Activated CD4-positive, alpha-beta T cell treated with anti-CD3 and anti-CD28 coated beads for 36 hours (primary cell): ENCODE measurements at regions of chr3 and their contacts with region 1.

Region 1: GRCh38 chr3:129183569-129184395 is at the start of gene CNBP:
- DNase-seq: peak; percentile 96
- ATAC-seq: peak; percentile 95
- H3K4me3 Mint-ChIP-seq: peak within 1 kb of the TSS; percentile 96
- H3K27ac Mint-ChIP-seq: peak within 1 kb of the TSS; percentile 99
- H3K4me1 Mint-ChIP-seq: peaks cover 29% of the 10 kb centered on the region
- H3K27me3 Mint-ChIP-seq: no peaks in the 10 kb centered on the region
- total RNA-seq, gene CNBP: 305 to 379 TPM

Region 2: DNA sequence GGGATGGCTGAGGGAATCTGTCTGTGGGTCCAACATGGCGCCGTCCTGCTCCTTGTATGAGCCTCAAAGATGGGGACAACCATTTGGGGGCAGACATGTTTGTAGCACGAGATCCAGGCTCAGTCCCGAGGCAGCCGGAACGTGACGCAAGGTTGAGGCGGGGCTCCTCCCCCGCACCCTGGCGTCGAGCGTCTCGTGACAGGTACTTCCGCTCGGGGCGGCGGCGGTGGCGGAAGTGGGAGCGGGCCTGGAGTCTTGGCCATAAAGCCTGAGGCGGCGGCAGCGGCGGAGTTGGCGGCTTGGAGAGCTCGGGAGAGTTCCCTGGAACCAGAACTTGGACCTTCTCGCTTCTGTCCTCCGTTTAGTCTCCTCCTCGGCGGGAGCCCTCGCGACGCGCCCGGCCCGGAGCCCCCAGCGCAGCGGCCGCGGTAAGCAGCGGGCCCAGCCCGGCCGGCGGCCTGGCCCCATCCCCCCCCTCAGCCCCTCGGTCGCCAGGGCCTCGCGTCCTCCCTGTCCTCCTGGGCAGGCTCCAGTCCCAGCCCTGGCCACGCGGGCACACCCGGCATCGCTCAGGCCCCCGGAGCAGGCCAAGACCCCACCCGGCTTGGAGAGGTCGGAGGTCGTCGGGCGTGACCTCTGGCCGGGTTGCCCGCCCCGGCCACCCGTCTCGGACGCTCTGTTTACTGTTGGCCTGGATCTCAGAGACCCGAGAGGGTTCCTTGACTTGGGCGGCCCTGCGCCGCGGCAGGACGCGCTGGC is 457.7 kb before region 1 on chr3 and contains the start of gene RAB7A:
- CTCF ChIA-PET with region 1: no interaction called
- POLR2A ChIA-PET with region 1: no interaction called
- intact Hi-C with region 1: loop called in 1 of 2 experiments (anchors 5 kb)
- DNase-seq: peak; percentile 99
- ATAC-seq: peak; percentile 92
- H3K4me3 Mint-ChIP-seq: peak within 1 kb of the TSS; percentile 89
- H3K27ac Mint-ChIP-seq: peak within 1 kb of the TSS; percentile 92
- H3K4me1 Mint-ChIP-seq: peaks cover 52% of the 10 kb centered on the region
- H3K27me3 Mint-ChIP-seq: no peaks in the 10 kb centered on the region
- total RNA-seq, gene RAB7A: 297 to 534 TPM

Region 3: DNA sequence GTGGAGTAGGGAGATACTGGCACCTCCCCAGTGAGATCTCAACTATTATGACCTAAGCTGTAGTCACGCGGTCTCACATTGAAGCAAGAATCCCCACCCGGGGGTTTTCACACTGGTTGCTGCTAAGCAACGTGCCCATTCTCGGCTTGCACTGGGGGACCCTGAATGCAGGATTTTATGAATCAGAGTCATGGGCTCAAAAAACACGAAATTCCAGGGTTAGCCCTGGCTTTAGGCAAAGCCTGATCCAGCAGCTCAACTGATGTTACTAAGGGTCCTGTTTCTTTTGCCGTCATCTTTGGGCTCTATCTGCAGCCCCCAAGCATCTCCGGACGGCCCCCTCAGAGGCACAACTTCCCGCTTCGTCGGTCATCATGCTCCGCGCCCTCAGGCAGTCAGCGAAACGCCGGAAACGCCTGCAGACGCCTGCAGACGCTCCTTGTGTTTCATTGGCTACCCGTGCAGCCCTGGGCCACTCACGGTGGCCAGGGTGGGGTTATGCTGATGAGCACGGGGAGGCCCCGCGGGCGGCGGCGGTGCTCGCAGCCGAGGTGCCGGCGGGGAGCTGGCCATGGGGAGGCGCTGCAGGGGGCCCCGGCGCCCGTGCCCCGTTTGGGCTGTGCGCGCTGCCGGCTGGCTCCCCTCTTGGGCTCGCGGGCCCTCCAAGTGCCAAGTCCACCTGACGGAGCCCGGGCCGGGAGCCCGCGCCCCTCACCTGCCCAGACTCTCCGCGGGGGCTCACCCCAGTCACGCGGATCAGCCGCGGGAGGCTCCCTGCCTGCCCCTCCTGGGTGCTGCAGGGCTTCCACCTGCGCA is 156.8 kb before region 1 on chr3:
- CTCF ChIA-PET with region 1: interaction called, 3 read pairs
- POLR2A ChIA-PET with region 1: no interaction called
- intact Hi-C with region 1: loop called in 1 of 2 experiments (anchors 1 kb)
- DNase-seq: peak; percentile 96
- ATAC-seq: peak; percentile 100
- H3K4me3 Mint-ChIP-seq: peak overlapping the region; percentile 72
- H3K27ac Mint-ChIP-seq: peak overlapping the region; percentile 81
- H3K4me1 Mint-ChIP-seq: peaks cover 12% of the 10 kb centered on the region
- H3K27me3 Mint-ChIP-seq: no peaks in the 10 kb centered on the region

Region 4: GRCh38 chr3:129233538-129233937 is 49.8 kb after region 1 on chr3:
- CTCF ChIA-PET with region 1: no interaction called
- POLR2A ChIA-PET with region 1: no interaction called
- intact Hi-C with region 1: loop called (anchors 1 to 5 kb)
- DNase-seq: no peak
- ATAC-seq: no peak
- H3K4me3 Mint-ChIP-seq: no peak overlapping the region
- H3K27ac Mint-ChIP-seq: no peak overlapping the region
- H3K4me1 Mint-ChIP-seq: peaks cover 13% of the 10 kb centered on the region
- H3K27me3 Mint-ChIP-seq: no peaks in the 10 kb centered on the region

Region 5: DNA sequence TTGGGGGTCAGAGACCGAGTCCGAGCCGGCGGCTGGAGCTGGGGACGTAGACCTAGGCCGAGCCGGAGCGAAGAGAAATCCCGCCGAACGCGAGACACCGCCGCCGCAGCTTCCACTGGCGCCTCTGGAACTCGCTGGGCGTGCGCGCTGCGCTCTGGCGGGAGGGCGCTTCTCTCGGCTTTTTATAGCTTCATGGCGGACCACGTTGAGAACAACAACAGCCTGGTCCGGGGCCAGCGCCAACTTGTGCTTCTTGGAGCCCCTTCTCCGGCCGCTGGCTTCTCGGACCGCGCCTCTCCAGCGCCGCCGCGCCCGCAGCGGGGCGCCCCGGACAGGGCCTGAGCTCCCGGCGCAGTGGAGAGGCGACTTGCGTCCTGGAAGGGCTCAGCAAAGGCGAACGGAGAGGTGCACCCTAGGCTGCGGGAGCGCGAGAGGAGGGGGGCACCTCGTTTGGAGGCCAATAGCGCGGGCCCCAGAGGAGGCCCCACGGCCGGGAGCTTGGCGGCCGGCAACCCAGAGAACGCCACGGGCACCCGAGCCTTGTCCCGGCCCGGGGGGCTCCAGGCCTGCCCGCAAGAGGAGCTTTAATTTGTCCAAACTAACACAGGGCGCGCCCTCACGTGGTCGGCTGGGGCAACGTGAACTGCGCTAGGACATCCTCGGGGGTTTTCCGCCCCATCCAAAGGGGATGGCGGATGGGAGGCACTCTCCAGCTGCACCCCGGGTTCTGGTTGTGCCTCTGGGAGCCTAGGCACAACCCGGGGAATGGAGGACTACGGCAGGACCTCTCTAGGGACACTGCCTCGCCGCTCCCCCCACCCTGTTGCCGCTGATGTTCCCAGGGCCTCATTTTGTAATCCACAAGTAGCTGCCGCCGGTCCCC is 132.6 kb after region 1 on chr3:
- CTCF ChIA-PET with region 1: interaction called, 3 read pairs
- POLR2A ChIA-PET with region 1: interaction called, 5 read pairs
- intact Hi-C with region 1: loop called in 1 of 2 experiments (anchors 2 kb)
- DNase-seq: peak; percentile 93
- ATAC-seq: peak; percentile 39
- H3K4me3 Mint-ChIP-seq: peak overlapping the region; percentile 88
- H3K27ac Mint-ChIP-seq: peak overlapping the region; percentile 58
- H3K4me1 Mint-ChIP-seq: peaks cover 22% of the 10 kb centered on the region
- H3K27me3 Mint-ChIP-seq: no peaks in the 10 kb centered on the region

Region 6: DNA sequence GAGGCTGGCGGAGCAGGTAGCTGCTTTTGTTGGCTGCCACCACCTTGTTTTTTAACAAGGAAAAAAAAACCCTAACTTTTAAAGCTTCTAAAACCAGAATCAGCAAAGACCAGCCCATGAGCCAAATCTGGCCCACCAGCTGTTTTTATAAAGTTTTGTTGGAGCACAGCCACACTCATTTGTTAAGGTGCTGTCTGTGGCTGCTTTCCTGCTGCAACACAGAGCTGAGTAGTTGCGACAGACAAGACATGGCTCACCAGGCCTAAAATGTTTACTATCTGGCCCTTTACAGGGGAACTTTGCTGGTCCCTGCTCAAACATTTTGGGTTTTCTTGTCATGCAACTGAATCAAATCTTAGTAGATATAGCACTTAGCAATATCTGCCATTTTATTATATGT is 225.8 kb after region 1 on chr3:
- CTCF ChIA-PET with region 1: no interaction called
- POLR2A ChIA-PET with region 1: no interaction called
- intact Hi-C with region 1: no loop called
- DNase-seq: no peak
- ATAC-seq: no peak
- H3K4me3 Mint-ChIP-seq: no peak overlapping the region
- H3K27ac Mint-ChIP-seq: no peak overlapping the region
- H3K4me1 Mint-ChIP-seq: no peaks in the 10 kb centered on the region
- H3K27me3 Mint-ChIP-seq: no peaks in the 10 kb centered on the region